Calu3 (cell line): ENCODE measurements at regions of chr1 and their contacts with region 1.

Region 1: DNA sequence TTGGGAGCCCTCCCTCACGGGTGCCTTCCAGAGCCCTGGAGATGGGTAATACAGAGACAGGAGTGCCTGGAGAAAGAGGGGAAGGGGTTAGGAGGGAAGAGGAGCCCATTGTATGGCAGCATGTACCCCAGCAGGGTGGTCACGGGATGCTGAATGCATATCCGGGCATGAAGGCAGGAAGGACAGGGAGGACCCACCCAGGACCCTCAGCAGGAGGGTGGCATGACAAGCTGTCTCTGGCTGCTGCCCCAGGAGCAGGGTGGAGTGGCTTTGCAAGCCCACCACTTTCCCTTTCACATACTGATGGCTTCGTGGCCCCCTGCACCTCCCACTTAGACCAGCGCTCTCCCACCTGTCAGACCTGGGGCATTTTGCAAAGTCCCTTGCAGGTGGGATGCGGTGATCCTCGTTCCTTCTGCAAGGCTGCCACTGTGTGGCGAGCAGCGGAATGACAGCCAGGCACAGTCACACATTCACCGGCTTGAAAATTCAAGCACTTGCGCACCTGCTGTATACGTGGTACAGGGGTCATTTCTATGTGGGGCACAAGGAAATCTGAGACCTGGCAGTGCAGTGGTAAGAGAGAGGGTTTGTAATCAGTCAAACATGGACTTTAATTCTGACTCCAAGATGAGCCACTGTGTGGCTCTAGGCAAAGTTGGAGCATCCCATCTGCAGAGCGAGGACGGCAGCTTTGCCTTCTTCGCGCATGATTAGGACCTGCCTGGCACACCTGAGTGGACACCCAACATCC is 53.2 kb upstream of the TMEM51 start:
- DNase-seq: peak; percentile 70
- H3K4me3 Mint-ChIP-seq: no peak overlapping the region
- H3K27ac Mint-ChIP-seq: no peak overlapping the region
- H3K4me1 Mint-ChIP-seq: peaks cover 21% of the 10 kb centered on the region
- H3K27me3 Mint-ChIP-seq: peaks cover 40% of the 10 kb centered on the region
- CTCF ChIP-seq: peak; percentile 85

Region 2: GRCh38 chr1:14970115-14970798 is 130.0 kb before region 1 on chr1:
- CTCF ChIA-PET with region 1: no interaction called
- intact Hi-C with region 1: no loop called
- DNase-seq: peak; percentile 55
- H3K4me3 Mint-ChIP-seq: no peak overlapping the region
- H3K27ac Mint-ChIP-seq: no peak overlapping the region
- H3K4me1 Mint-ChIP-seq: no peaks in the 10 kb centered on the region
- H3K27me3 Mint-ChIP-seq: no peaks in the 10 kb centered on the region
- CTCF ChIP-seq: no peak

Region 3: GRCh38 chr1:15062479-15063099 is 37.7 kb before region 1 on chr1:
- CTCF ChIA-PET with region 1: no interaction called
- intact Hi-C with region 1: loop called (anchors 2 kb)
- DNase-seq: peak; percentile 8
- H3K4me3 Mint-ChIP-seq: no peak overlapping the region
- H3K27ac Mint-ChIP-seq: no peak overlapping the region
- H3K4me1 Mint-ChIP-seq: no peaks in the 10 kb centered on the region
- H3K27me3 Mint-ChIP-seq: no peaks in the 10 kb centered on the region
- CTCF ChIP-seq: peak; percentile 47